Activated CD8-positive, alpha-beta T cell treated with anti-CD3 and anti-CD28 coated beads, Interleukin-2, amount 10 ng/mL, durations not matched to agents 7 days and 5 days (primary cell): ENCODE measurements at regions of chr1 and their contacts with region 1.

Region 1: DNA sequence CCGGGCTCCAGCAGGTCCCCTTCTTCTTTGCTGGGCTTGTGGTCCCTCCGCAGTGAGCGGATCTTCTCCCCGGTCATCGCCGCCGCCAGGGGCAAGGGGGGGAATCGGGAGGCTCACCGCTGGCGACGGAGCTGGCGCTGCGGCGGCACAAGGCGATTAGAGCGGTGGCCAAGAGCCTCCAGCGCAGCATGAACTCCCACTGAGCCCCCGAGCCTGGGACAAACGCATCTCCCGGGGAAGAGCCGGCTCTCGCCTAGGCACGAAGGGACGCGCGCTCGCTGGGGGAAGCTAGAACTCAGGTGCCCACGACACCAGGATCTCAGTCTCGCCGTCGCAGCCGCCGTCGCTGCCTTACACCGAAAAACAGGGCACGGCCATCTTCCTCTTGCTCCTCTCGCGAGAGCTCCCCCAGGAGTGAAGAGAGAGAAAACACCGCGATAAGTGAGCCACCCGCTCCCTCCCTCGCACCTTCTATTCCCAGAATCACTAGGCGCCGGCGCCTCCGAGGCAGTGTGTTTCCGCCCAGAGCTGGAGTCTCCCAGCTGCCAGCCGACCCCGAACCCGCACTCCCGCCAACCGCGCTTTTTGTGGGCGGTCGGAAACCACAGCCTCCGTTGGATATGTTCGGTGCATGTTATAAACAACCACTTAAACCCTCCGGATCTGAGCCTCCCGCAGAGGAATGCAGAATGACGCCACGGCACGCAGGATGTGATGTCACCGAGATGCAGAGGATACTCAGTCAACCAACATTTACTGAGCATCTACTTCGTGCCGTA is at the start of gene ANKRD13C:
- DNase-seq: peak; percentile 95
- ATAC-seq: peak; percentile 91
- H3K4me3 Mint-ChIP-seq: peak within 1 kb of the TSS; percentile 91
- H3K27ac Mint-ChIP-seq: peak within 1 kb of the TSS; percentile 93
- H3K4me1 Mint-ChIP-seq: peaks cover 37% of the 10 kb centered on the region
- H3K27me3 Mint-ChIP-seq: no peaks in the 10 kb centered on the region
- total RNA-seq, gene ANKRD13C: 25.0 to 26.8 TPM

Region 2: DNA sequence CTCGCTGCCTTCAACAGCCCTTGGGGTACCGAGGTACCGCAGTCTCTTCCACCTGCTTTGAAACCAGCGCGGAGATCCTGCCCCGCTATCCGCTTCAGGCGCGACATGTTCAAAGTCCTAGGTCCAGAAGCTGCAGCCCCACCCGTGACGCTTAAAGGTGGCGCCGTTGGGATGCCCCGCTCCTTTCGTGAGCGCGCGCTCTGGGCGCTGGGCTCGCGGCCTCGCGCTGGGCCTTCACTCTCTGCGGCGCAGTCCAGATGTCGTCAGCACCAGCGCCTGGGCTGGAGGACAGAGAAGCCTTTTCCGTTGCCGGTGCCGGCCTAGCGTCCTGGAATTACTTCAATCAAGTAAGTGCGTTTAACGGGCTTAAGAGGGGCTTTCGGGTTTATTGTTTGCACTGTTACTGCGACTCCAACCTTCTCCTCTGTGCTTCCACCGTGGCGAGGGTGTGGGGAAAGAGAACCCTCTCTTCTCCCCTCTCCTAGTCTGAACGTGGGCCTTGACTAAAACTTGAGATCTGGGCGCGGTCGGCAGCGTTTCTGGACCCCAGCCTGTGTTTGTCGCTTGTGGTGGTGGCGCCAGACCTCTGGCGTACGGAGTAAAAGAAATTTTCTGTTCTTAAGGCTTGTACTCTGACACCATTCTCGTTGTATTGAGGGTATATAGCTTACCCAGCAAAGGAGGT is 148.9 kb before region 1 on chr1 and contains the start of gene LRRC40:
- CTCF ChIA-PET with region 1: interaction called, 5 read pairs
- POLR2A ChIA-PET with region 1: interaction called, 19 read pairs
- DNase-seq: peak; percentile 97
- ATAC-seq: peak; percentile 96
- H3K4me3 Mint-ChIP-seq: peak within 1 kb of the TSS; percentile 99
- H3K27ac Mint-ChIP-seq: peak within 1 kb of the TSS; percentile 100
- H3K4me1 Mint-ChIP-seq: peaks cover 60% of the 10 kb centered on the region
- H3K27me3 Mint-ChIP-seq: no peaks in the 10 kb centered on the region
- total RNA-seq, gene LRRC40: 22.5 to 22.7 TPM